ENCODE measurements at regions of chr5 and their contacts with region 1.

Region 1: GRCh38 chr5:67059744-67060490 is 136.7 kb downstream of the CD180 start:
- DNase-seq: no peak
- ATAC-seq: peak in 1 of 4 donors; percentile 16
- H3K4me3 ChIP-seq: no peak overlapping the region
- H3K27ac ChIP-seq: peak overlapping the region in 5 of 12 donors; percentile 1 to 41 (median 23)
- H3K4me1 ChIP-seq: peaks cover 5 to 65% (median 33%) of the 10 kb centered on the region in 12 donors
- H3K27me3 ChIP-seq: no peaks in the 10 kb centered on the region
- CTCF ChIP-seq: no peak
- POLR2A ChIP-seq: no peak

Region 2: DNA sequence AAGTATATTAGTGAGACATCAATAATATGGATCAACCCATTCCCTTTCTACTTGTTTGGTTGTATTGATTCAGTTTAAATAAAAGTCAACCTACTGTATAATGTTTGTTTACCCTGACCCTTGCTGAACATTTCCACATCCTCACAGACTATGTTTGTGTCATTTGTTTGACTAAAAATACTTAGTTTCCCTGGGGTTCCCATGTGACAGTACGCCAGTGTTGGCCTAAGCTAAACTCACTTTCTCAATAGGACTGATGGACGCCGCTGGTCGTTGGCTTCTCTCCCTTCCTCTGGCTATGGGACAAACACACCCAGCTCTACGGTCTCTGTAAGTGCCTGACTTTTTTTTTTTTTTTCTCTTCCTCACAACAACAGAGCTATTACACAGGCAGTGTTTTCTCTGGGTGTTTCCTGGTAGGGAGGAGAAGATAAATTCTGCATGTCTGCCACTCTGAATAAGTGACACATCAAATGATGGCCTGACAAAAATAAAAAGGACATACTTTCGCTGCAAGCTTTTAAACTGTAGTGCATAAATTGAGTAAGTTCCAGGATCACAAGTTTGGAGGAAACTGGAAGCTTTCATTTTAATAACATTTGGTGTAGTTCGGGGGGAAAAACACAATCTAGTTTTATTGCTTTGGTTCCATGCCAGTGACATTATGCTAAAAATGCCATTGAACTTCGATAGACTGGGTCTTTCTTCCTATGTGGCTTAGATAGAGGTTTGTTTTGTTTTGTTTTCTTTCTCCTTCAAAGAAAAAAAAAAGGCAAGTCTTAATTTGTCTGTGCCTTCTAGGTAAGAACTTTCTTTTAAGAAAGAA is 35.6 kb after region 1 on chr5:
- intact Hi-C with region 1: loop called in 1 of 10 experiments (anchors 5 kb)
- DNase-seq: peak; percentile 73 to 84 (median 84)
- ATAC-seq: peak; percentile 93 to 98 (median 96)
- H3K4me3 ChIP-seq: peak overlapping the region in 8 of 12 donors; percentile 16 to 43 (median 28)
- H3K27ac ChIP-seq: peak overlapping the region; percentile 63 to 83 (median 76)
- H3K4me1 ChIP-seq: peaks cover 2 to 63% (median 47%) of the 10 kb centered on the region in 12 donors
- H3K27me3 ChIP-seq: no peaks in the 10 kb centered on the region
- CTCF ChIP-seq: no peak
- POLR2A ChIP-seq: no peak